ENCODE measurements at regions of chr17 and their contacts with region 1.

Region 1: DNA sequence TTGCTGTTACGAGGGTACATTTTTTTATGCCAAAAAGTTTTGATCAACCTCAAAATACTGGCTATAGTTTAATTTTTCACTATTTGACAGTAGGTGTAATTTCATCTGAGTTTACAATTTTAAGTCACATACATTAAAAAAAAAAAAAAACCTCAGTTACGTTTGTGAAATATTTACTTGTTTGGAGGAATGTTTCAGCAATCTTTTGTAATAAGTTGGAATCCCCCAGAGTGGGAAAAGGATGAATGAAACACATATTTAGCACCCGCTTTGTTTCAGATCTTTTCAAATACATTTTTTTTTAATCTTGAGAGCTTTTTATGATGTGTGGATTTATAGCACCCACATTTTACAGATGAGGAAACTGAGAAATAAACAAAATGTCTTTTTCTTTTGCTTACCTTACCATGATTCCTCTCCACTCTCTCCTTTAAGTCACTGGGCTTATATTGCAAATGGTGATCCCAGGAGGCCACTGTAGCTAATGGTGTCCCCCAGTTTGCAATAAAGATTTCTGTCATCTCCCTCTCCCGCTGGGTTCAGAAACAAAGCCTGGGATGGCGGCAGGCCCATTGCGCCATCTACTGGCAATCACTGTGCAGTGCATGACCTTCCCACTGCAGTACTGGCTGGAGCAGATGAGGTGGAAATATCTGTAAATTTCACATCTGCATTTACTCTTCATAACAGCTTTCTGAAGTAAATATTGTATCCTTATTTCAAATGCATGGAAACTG is 27.7 kb downstream of the TBC1D3B start:
- DNase-seq: no peak
- H3K4me3 ChIP-seq: no peak overlapping the region
- H3K27ac ChIP-seq: no peak overlapping the region
- H3K4me1 ChIP-seq: no peaks in the 10 kb centered on the region
- H3K27me3 ChIP-seq: no peaks in the 10 kb centered on the region
- CTCF ChIP-seq: peak; percentile 99 to 100 (median 99)

Region 2: DNA sequence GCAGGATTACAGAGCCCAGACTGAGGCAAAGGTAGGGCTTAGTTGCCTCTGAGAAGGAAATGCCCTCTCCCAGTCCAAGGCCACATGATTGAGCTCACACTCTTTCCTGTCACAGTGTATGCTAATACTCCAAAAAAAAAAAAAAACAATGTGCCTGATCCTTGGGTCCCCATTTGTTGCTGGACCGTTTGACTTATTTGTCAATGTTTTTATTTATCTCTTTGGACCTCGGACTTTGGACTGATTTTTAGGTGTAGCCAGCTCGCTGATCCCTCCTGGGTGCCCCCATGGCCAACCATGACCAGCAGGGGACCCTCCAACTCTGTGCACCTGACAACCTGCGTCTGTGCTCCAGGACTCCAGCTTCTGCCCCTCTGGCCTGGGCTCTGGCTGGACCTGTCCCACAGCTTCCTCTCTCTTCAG is 166.8 kb before region 1 on chr17:
- dilution Hi-C with region 1: loop called (anchors 25 kb)
- DNase-seq: no peak
- H3K4me3 ChIP-seq: no peak overlapping the region
- H3K27ac ChIP-seq: no peak overlapping the region
- H3K4me1 ChIP-seq: no peaks in the 10 kb centered on the region
- H3K27me3 ChIP-seq: peaks cover 9% of the 10 kb centered on the region
- CTCF ChIP-seq: no peak

Region 3: GRCh38 chr17:36034127-36034526 is 114.6 kb before region 1 on chr17:
- dilution Hi-C with region 1: no loop called
- DNase-seq: no peak
- H3K4me3 ChIP-seq: no peak overlapping the region
- H3K27ac ChIP-seq: no peak overlapping the region
- H3K4me1 ChIP-seq: peaks cover 10% of the 10 kb centered on the region
- H3K27me3 ChIP-seq: no peaks in the 10 kb centered on the region
- CTCF ChIP-seq: no peak

Measured in keratinocyte (primary cell).